B cell (primary cell): ENCODE measurements at regions of chr17 and their contacts with region 1.

Region 1: DNA sequence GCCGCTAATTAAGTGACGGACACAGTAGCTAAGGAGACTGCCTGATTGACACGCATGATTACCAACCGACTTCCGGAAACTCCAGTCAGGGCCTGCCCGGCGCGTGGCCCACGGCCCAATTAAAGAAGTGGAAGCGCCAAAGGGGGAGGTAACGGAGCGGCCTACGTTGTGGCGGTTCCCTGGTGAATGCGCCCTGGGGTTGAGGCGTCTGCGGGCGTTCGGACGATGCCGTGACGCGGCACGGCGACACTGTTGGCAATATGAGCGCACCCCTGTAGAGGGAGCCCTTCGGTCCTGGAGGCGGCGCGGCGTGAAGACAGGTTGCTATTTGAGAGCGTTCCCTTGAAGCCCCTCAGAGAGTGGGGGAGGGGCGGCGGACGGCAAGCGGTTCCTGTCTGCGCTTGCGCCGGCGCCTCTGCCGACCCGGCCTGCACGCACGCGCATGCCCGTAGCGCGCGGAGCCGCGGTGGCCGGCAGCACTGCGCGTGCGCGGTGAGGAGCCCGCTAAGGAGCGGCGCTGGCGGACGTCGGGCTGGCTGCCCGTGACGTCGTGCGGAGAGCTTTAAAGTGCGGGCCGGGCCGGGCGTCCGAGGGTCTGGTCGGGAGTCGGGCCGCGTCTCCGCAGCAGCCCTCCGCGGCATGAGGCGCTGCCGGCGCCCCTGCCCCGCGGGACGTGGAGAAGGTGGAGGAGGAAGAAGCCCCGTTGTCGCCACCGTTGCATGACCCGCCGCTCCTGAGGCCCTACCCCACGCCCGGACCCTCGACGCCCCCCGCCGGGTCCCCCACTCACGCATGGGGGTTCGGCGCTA is at the start of gene ALKBH5:
- DNase-seq: peak; percentile 100
- ATAC-seq: peak; percentile 82
- H3K4me3 ChIP-seq: peak within 1 kb of the TSS; percentile 65 to 94 (median 81)
- H3K4me3 Mint-ChIP-seq: peak within 1 kb of the TSS; percentile 99
- H3K27ac ChIP-seq: peak within 1 kb of the TSS; percentile 93 to 96
- H3K27ac Mint-ChIP-seq: peak within 1 kb of the TSS; percentile 100
- H3K4me1 ChIP-seq: peaks cover 45 to 49% of the 10 kb centered on the region in 2 donors
- H3K4me1 Mint-ChIP-seq: peaks cover 50% of the 10 kb centered on the region
- H3K27me3 ChIP-seq: no peaks in the 10 kb centered on the region
- H3K27me3 Mint-ChIP-seq: no peaks in the 10 kb centered on the region
- CTCF ChIP-seq: peak; percentile 63
- total RNA-seq, gene ALKBH5: 103 and 104 TPM in 2 replicates

Region 2: DNA sequence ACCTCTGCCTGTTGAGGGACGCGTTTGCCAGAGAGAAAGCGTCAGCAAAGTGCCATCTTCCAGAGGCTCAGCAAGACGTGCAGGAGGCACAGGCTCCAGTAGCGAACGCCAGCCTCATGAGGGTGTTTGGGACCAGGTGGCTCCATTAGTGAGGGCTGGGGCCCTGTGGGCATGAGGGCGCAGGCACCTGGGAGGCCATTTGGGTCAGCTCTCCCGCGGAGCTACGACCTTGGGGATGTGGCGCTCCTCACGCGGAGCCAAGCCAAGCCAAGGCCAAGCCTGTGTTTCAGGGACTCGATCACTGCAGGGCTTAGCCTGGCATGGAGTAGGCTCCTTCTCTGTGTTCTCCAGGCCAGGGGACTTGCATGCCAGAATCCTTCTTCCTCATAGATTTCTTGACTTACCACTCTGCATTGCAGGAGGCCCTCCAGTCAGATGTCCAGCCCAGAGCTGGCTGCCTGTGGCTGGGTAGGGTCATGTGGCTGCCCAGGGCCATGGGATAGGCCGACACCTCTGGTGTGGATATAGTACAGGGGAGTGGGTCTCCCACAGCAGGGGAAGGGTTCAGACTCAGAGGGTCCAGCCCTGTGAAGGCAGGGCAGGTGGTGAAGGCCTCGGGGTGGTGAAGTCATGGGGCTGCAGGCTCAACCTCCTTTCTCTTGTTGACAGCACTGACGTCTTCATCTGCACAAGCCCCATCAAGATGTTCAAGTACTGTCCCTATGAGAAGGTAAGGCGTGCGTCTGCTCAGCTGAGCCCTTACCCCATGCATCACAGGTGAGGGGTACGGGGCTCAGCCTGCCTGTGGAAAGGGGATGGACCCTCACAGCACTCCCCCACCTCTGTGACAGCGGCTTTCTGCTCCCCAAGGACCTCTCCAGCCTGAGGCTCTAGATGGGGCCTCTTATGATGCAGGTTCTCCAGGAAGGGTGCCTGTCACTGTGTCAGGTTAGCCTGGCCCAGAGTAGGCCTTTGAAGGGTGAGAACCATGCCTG is 860.7 kb before region 1 on chr17:
- CTCF ChIA-PET with region 1: no interaction called
- POLR2A ChIA-PET with region 1: no interaction called
- intact Hi-C with region 1: no loop called
- DNase-seq: no peak
- ATAC-seq: no peak
- H3K4me3 ChIP-seq: no peak overlapping the region
- H3K4me3 Mint-ChIP-seq: no peak overlapping the region
- H3K27ac ChIP-seq: no peak overlapping the region
- H3K27ac Mint-ChIP-seq: no peak overlapping the region
- H3K4me1 ChIP-seq: no peaks in the 10 kb centered on the region
- H3K4me1 Mint-ChIP-seq: no peaks in the 10 kb centered on the region
- H3K27me3 ChIP-seq: no peaks in the 10 kb centered on the region
- H3K27me3 Mint-ChIP-seq: no peaks in the 10 kb centered on the region
- CTCF ChIP-seq: no peak

Region 3: DNA sequence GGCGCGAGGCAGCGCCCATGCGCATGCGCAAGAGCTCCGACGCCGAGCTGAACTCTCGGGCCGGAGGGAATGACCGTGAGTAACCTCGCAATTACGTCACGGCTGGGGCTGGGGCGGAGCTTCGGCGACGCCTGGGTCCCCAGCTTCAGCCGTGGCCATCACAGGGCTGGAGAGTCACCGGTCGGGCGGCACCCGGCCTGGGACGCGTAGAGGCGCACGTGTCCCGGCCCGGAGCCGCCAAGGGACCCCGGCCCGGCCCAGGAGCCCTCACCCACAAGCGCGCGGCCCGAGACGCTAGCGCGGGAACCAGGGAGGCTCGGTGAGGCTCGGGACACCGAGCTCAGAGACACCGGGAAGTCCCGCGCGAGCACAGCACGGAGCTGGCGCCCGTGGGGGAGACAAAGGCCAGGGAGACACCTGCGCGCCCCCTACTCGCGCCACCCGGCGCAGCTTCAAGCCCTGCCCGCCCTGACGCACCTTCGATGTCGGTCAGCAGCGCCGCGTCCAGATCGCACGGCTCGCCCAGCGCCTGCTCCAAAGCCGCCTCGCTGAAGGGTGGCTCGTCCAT is 347.2 kb before region 1 on chr17:
- CTCF ChIA-PET with region 1: no interaction called
- POLR2A ChIA-PET with region 1: no interaction called
- intact Hi-C with region 1: loop called (anchors 2 kb)
- DNase-seq: peak; percentile 98
- ATAC-seq: peak; percentile 69
- H3K4me3 ChIP-seq: peak overlapping the region; percentile 23 to 91 (median 89)
- H3K4me3 Mint-ChIP-seq: peak overlapping the region; percentile 88
- H3K27ac ChIP-seq: peak overlapping the region; percentile 93 to 97
- H3K27ac Mint-ChIP-seq: peak overlapping the region; percentile 91
- H3K4me1 ChIP-seq: peaks cover 45 to 64% of the 10 kb centered on the region in 2 donors
- H3K4me1 Mint-ChIP-seq: peaks cover 61% of the 10 kb centered on the region
- H3K27me3 ChIP-seq: no peaks in the 10 kb centered on the region
- H3K27me3 Mint-ChIP-seq: no peaks in the 10 kb centered on the region
- CTCF ChIP-seq: no peak

Region 4: GRCh38 chr17:18076936-18077335 is 106.6 kb before region 1 on chr17:
- CTCF ChIA-PET with region 1: no interaction called
- POLR2A ChIA-PET with region 1: no interaction called
- intact Hi-C with region 1: no loop called
- DNase-seq: no peak
- ATAC-seq: no peak
- H3K4me3 ChIP-seq: no peak overlapping the region
- H3K4me3 Mint-ChIP-seq: no peak overlapping the region
- H3K27ac ChIP-seq: no peak overlapping the region
- H3K27ac Mint-ChIP-seq: no peak overlapping the region
- H3K4me1 ChIP-seq: no peaks in the 10 kb centered on the region
- H3K4me1 Mint-ChIP-seq: no peaks in the 10 kb centered on the region
- H3K27me3 ChIP-seq: peaks cover 0 to 3% (median 0%) of the 10 kb centered on the region in 4 experiments
- H3K27me3 Mint-ChIP-seq: peaks cover 22% of the 10 kb centered on the region
- CTCF ChIP-seq: no peak

Region 5: GRCh38 chr17:18087610-18088491 is 95.7 kb before region 1 on chr17 and contains the start of gene DRG2:
- CTCF ChIA-PET with region 1: no interaction called
- POLR2A ChIA-PET with region 1: no interaction called
- intact Hi-C with region 1: loop called (anchors 1 kb)
- DNase-seq: peak; percentile 94
- ATAC-seq: peak; percentile 92
- H3K4me3 ChIP-seq: peak within 1 kb of the TSS; percentile 71 to 99 (median 91)
- H3K4me3 Mint-ChIP-seq: peak within 1 kb of the TSS; percentile 99
- H3K27ac ChIP-seq: peak within 1 kb of the TSS; percentile 67 to 90
- H3K27ac Mint-ChIP-seq: peak within 1 kb of the TSS; percentile 98
- H3K4me1 ChIP-seq: peaks cover 8 to 22% of the 10 kb centered on the region in 2 donors
- H3K4me1 Mint-ChIP-seq: peaks cover 25% of the 10 kb centered on the region
- H3K27me3 ChIP-seq: no peaks in the 10 kb centered on the region
- H3K27me3 Mint-ChIP-seq: no peaks in the 10 kb centered on the region
- CTCF ChIP-seq: no peak
- total RNA-seq, gene DRG2: 67.8 and 73.1 TPM in 2 replicates

Region 6: GRCh38 chr17:18158022-18158600 is 25.4 kb before region 1 on chr17:
- CTCF ChIA-PET with region 1: interaction called, 3 read pairs
- POLR2A ChIA-PET with region 1: interaction called, 30 read pairs
- intact Hi-C with region 1: loop called (anchors 1 kb)
- DNase-seq: peak; percentile 95
- ATAC-seq: peak; percentile 79
- H3K4me3 ChIP-seq: peak overlapping the region; percentile 9 to 66 (median 55)
- H3K4me3 Mint-ChIP-seq: peak overlapping the region; percentile 93
- H3K27ac ChIP-seq: peak overlapping the region; percentile 58 to 65
- H3K27ac Mint-ChIP-seq: peak overlapping the region; percentile 91
- H3K4me1 ChIP-seq: peaks cover 12 to 27% of the 10 kb centered on the region in 2 donors
- H3K4me1 Mint-ChIP-seq: peaks cover 27% of the 10 kb centered on the region
- H3K27me3 ChIP-seq: no peaks in the 10 kb centered on the region
- H3K27me3 Mint-ChIP-seq: no peaks in the 10 kb centered on the region
- CTCF ChIP-seq: no peak

Region 7: DNA sequence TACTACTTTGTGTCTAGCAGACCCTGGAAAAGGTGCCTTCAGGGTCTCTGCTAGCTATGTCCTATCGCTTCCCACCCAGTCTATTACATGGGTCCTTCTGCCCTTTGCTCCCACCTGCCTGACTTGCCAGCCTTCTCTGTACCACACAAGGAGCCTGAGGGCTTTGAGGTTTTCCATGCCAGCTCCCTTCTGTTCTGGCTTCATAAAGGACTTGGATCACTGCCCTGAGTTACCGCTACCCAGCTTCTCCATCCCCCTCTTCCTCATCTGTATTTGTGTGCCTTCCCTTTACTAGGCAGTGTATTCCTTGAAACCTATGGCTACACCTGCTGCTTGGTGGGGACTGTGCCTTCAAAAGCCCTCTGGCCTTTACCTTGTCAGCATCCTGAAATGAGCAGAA is 22.3 kb after region 1 on chr17:
- CTCF ChIA-PET with region 1: no interaction called
- POLR2A ChIA-PET with region 1: no interaction called
- intact Hi-C with region 1: no loop called
- DNase-seq: no peak
- ATAC-seq: no peak
- H3K4me3 ChIP-seq: no peak overlapping the region
- H3K4me3 Mint-ChIP-seq: no peak overlapping the region
- H3K27ac ChIP-seq: no peak overlapping the region
- H3K27ac Mint-ChIP-seq: no peak overlapping the region
- H3K4me1 ChIP-seq: no peaks in the 10 kb centered on the region
- H3K4me1 Mint-ChIP-seq: peaks cover 4% of the 10 kb centered on the region
- H3K27me3 ChIP-seq: no peaks in the 10 kb centered on the region
- H3K27me3 Mint-ChIP-seq: no peaks in the 10 kb centered on the region
- CTCF ChIP-seq: no peak

Region 8: GRCh38 chr17:18245038-18245782 is 61.7 kb after region 1 on chr17:
- CTCF ChIA-PET with region 1: no interaction called
- POLR2A ChIA-PET with region 1: interaction called, 10 read pairs
- intact Hi-C with region 1: no loop called
- DNase-seq: no peak
- ATAC-seq: no peak
- H3K4me3 ChIP-seq: no peak overlapping the region
- H3K4me3 Mint-ChIP-seq: no peak overlapping the region
- H3K27ac ChIP-seq: no peak overlapping the region
- H3K27ac Mint-ChIP-seq: no peak overlapping the region
- H3K4me1 ChIP-seq: no peaks in the 10 kb centered on the region
- H3K4me1 Mint-ChIP-seq: peaks cover 6% of the 10 kb centered on the region
- H3K27me3 ChIP-seq: no peaks in the 10 kb centered on the region
- H3K27me3 Mint-ChIP-seq: no peaks in the 10 kb centered on the region
- CTCF ChIP-seq: no peak

Region 9: DNA sequence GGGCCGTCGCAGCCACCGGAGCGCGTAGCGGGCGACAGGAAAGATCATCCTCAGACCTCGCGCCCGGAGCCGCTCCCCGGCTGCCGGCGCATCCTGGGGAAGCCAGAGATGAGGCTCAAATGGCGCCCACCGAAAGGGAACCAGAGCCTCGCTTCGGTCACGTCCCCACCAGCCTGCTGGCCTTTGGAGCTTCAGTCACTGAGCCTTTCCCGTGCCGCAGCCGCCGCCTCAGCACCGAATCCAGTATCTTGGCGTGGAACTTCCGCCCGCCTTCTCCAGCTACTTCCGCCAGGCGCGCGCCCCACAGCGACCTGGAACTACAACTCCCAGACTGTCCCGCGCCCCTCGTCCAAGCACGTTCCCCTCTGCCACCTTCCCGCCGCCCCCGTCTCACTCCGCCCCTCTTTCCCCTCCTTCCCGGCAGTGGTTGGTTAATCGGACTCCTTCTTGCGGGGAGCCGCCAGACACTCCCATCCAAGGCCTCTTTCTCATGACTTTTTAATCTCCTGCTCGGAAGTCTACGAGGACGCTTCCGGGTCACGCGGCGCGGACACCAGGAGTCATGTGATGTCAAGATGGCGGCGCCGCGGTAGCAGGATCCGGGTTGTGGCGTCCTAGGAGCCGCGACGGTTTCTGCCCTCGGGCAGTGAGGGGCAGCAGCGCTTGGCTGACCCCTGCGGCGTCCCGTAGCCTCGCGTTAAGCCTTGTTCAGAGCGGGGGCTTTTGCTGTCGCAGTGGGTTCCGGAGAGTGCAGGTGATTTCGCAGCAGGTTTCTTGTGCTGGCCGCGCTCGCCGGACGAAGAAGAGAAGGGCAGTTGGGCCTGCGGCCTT is 131.4 kb after region 1 on chr17 and contains the starts of genes SMCR8 and TOP3A:
- CTCF ChIA-PET with region 1: no interaction called
- POLR2A ChIA-PET with region 1: interaction called, 3 read pairs
- intact Hi-C with region 1: loop called (anchors 1 kb)
- DNase-seq: peak; percentile 96
- ATAC-seq: peak; percentile 93
- H3K4me3 ChIP-seq: peak within 1 kb of the TSS; percentile 74 to 98 (median 87)
- H3K4me3 Mint-ChIP-seq: peak within 1 kb of the TSS; percentile 96
- H3K27ac ChIP-seq: peak within 1 kb of the TSS; percentile 91 to 99
- H3K27ac Mint-ChIP-seq: peak within 1 kb of the TSS; percentile 98
- H3K4me1 ChIP-seq: peaks cover 43 to 59% of the 10 kb centered on the region in 2 donors
- H3K4me1 Mint-ChIP-seq: peaks cover 74% of the 10 kb centered on the region
- H3K27me3 ChIP-seq: no peaks in the 10 kb centered on the region
- H3K27me3 Mint-ChIP-seq: no peaks in the 10 kb centered on the region
- CTCF ChIP-seq: no peak
- total RNA-seq, gene SMCR8: 47.3 and 48.0 TPM in 2 replicates
- total RNA-seq, gene TOP3A: 55.8 and 61.7 TPM in 2 replicates